ENCODE measurements at regions of chr20 and their contacts with region 1.

Region 1: GRCh38 chr20:34069341-34070078 is 42.5 kb downstream of the EIF2S2 start:
- DNase-seq: peak; percentile 66 to 83
- ATAC-seq: peak; percentile 91
- H3K4me3 ChIP-seq: no peak overlapping the region
- H3K27ac ChIP-seq: no peak overlapping the region
- H3K4me1 ChIP-seq: 0 out of 3 replicates have a peak, but pooled peaks cover 9% of the 10 kb centered on the region
- CTCF ChIP-seq: peak; percentile 88
- EP300 ChIP-seq: no peak
- POLR2A ChIP-seq: no peak
- RAD21 ChIP-seq: peak; percentile 90 to 96

Region 2: GRCh38 chr20:33862709-33863403 is 206.7 kb before region 1 on chr20:
- CTCF ChIA-PET with region 1: interaction called, 33 read pairs
- POLR2A ChIA-PET with region 1: no interaction called
- DNase-seq: peak; percentile 32 to 55
- ATAC-seq: peak; percentile 52 to 79; a peak in 5 of 6 replicates
- H3K4me3 ChIP-seq: no peak overlapping the region
- H3K27ac ChIP-seq: peak overlapping the region; percentile 14 to 52; a peak in 3 of 6 replicates
- H3K4me1 ChIP-seq: peaks cover 18% of the 10 kb centered on the region
- CTCF ChIP-seq: peak; percentile 57
- EP300 ChIP-seq: no peak
- POLR2A ChIP-seq: no peak
- RAD21 ChIP-seq: peak; percentile 64 to 76

Region 3: DNA sequence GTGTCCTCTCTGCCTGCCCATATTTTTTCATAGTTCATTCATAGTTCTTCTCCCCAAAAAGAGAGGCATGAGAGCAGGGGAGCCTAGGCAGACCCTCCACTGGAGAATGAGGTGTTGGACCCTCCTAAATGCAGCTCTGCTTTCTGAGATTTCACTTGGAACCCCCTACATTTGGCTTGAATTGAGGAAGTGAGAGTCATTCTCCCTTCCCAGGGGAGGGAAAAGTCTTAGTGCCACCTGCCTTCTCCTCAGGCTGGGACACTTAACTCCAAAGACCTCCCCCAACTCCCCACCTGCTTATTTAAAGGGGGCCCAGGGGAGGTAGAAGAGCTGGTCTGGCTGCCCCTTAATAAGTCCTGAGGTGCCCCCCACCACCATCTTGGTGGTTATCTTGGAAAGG is 180.2 kb before region 1 on chr20:
- CTCF ChIA-PET with region 1: no interaction called
- POLR2A ChIA-PET with region 1: no interaction called
- DNase-seq: no peak
- ATAC-seq: no peak
- H3K4me3 ChIP-seq: no peak overlapping the region
- H3K27ac ChIP-seq: no peak overlapping the region
- H3K4me1 ChIP-seq: no peaks in the 10 kb centered on the region
- CTCF ChIP-seq: no peak
- EP300 ChIP-seq: no peak
- POLR2A ChIP-seq: no peak
- RAD21 ChIP-seq: no peak

Region 4: GRCh38 chr20:33933469-33933909 is 136.0 kb before region 1 on chr20:
- CTCF ChIA-PET with region 1: interaction called, 12 read pairs
- POLR2A ChIA-PET with region 1: no interaction called
- DNase-seq: peak; percentile 23 to 69
- ATAC-seq: peak; percentile 62 to 87; a peak in 4 of 6 replicates
- H3K4me3 ChIP-seq: no peak overlapping the region
- H3K27ac ChIP-seq: no peak overlapping the region
- H3K4me1 ChIP-seq: no peaks in the 10 kb centered on the region
- CTCF ChIP-seq: peak; percentile 33; the same call in 1 of the 3 replicates
- EP300 ChIP-seq: no peak
- POLR2A ChIP-seq: no peak
- RAD21 ChIP-seq: peak; percentile 51 to 76

Region 5: DNA sequence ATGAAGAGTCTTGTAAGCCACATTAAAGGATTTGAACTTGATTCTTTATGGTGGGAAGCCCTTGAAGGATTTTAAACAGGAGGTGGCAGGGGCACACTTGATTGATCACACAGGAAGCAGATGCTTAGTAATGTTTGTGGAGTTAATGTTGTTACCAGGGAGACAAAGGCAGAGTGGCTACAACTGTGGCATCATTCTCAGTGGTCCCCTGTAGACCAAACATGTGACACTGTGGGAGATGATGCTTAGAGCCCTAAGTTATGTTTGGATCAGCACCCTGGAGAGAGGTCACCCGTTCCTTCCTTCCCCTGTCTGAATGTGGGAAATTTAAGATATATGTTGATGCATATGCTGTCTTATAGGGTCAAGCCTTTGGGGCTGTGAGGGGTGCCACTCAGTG is 10.7 kb before region 1 on chr20:
- CTCF ChIA-PET with region 1: interaction called, 10 read pairs
- POLR2A ChIA-PET with region 1: no interaction called
- DNase-seq: no peak
- ATAC-seq: peak in 1 of 2 experiments; percentile 33; a peak in 2 of 6 replicates
- H3K4me3 ChIP-seq: no peak overlapping the region
- H3K27ac ChIP-seq: no peak overlapping the region
- H3K4me1 ChIP-seq: no peaks in the 10 kb centered on the region
- CTCF ChIP-seq: no peak
- EP300 ChIP-seq: no peak
- POLR2A ChIP-seq: no peak
- RAD21 ChIP-seq: no peak

Measured in A549 (cell line).